ENCODE measurements at regions of chr12 and their contacts with region 1.

Region 1: DNA sequence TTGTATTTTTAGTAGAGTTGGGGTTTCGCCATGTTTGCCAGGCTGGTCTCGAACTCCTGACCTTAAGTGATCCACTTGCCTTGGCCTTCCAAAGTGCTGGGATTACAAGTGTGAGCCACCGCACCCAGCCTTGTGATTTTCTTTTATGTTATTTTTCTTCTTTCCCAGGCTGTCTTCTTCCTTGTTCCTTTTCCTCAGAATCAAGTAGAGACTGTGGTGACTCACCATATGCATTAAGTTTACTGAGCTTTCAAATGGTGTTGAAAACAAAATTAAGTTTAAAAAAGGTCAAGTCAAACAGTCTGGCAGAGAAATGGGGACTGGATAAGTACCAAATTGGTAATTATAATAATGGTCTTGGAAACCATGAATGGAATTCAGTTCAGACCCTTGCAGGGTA is 5.7 kb downstream of the ARPC3 start:
- DNase-seq: no peak
- ATAC-seq: no peak
- H3K4me3 ChIP-seq: no peak overlapping the region
- H3K4me3 Mint-ChIP-seq: no peak overlapping the region
- H3K27ac ChIP-seq: no peak overlapping the region
- H3K27ac Mint-ChIP-seq: no peak overlapping the region
- H3K4me1 ChIP-seq: peaks cover 34 to 40% of the 10 kb centered on the region in 2 donors
- H3K4me1 Mint-ChIP-seq: peaks cover 37% of the 10 kb centered on the region
- H3K27me3 ChIP-seq: no peaks in the 10 kb centered on the region
- H3K27me3 Mint-ChIP-seq: no peaks in the 10 kb centered on the region
- CTCF ChIP-seq: no peak

Region 2: GRCh38 chr12:109995686-109996482 is 448.6 kb before region 1 on chr12 and contains the start of gene GIT2:
- CTCF ChIA-PET with region 1: no interaction called
- POLR2A ChIA-PET with region 1: interaction called, 11 read pairs
- intact Hi-C with region 1: no loop called
- DNase-seq: peak; percentile 95
- ATAC-seq: peak; percentile 69
- H3K4me3 ChIP-seq: peak within 1 kb of the TSS; percentile 68 to 99 (median 74)
- H3K4me3 Mint-ChIP-seq: peak within 1 kb of the TSS; percentile 90
- H3K27ac ChIP-seq: peak within 1 kb of the TSS; percentile 69 to 90
- H3K27ac Mint-ChIP-seq: peak within 1 kb of the TSS; percentile 91
- H3K4me1 ChIP-seq: peaks cover 39 to 47% of the 10 kb centered on the region in 2 donors
- H3K4me1 Mint-ChIP-seq: peaks cover 67% of the 10 kb centered on the region
- H3K27me3 ChIP-seq: no peaks in the 10 kb centered on the region
- H3K27me3 Mint-ChIP-seq: no peaks in the 10 kb centered on the region
- CTCF ChIP-seq: no peak
- total RNA-seq, gene GIT2: 163 and 177 TPM in 2 replicates